ENCODE measurements at regions of chr9 and their contacts with region 1.

Region 1: GRCh38 chr9:74773886-74774479 is 113.7 kb downstream of the TRPM6 start:
- DNase-seq: peak; percentile 81

Region 2: GRCh38 chr9:74304598-74304997 is 469.4 kb before region 1 on chr9:
- intact Hi-C with region 1: no loop called
- DNase-seq: no peak

Region 3: GRCh38 chr9:74742792-74743730 is 30.9 kb before region 1 on chr9:
- intact Hi-C with region 1: no loop called
- DNase-seq: no peak

Region 4: GRCh38 chr9:75001719-75002422 is 227.9 kb after region 1 on chr9:
- intact Hi-C with region 1: loop called (anchors 2 kb)
- DNase-seq: no peak

Region 5: DNA sequence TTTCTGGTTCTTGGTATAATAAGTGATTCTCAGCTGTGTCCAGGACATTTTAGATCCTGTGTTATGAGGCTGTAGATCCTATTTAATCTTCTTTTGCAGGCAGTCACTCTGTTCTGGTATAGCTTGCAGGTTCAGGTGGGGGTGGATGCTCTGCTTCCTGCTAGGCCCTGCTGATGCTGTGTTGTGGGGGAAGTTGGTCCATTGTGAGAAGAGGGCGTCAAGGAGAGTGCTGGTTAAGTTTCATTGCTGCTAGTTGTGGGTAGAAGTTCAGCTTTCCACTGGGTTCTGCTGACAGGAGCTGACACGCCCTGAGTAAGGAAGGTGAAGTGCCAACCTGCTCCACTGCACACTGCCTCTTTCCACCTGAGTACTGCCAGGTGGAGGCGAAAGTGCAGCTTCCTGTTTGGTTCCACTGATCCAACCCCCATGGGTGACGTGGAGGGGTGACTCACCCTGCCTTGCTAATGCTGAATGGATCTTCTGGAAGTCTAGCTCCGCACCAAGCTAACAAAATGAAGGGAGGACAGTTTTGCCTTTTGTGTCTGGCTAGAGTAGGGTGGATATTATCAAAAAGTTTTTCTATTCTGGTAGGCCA is 297.6 kb after region 1 on chr9:
- intact Hi-C with region 1: loop called (anchors 5 kb)
- DNase-seq: no peak